Right ventricle myocardium inferior (tissue), 1 donor: ENCODE measurements at regions of chr3 and their contacts with region 1.

Region 1: DNA sequence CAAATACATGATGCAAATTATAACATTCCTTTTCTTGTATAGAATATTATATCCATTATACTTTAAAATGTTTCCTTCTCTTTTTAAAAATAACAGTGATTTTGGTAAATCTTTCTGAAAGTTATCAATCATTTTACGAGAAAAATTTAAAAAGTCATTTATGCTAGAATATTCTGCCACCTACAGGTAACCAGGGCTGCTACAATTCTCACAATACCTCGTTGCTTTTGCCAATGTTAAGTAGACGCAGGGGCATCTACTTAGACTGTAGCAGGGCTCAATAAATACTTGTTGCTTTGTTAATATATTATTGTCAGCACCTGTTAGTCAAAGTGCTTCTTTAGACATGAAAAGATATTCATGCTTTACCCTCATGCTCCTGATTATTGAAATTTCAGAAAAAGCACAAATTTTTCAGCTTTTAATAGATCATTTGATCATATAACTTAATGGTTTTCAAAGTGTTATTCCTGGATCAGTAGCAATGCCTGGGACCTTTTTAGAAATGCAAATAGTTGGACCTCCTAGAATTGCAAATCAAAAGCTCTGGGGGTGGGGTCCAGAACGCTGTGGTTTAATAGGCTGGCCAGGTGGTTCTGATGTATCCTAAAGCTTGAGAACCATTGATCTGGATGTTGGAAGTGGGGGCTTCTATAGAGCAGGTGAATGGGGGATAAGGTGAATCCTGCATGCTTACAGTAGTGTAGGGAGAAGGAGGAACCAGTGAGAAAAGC is 223.6 kb upstream of the PDZRN3 start:
- DNase-seq: no peak
- ATAC-seq: peak; percentile 57

Region 2: DNA sequence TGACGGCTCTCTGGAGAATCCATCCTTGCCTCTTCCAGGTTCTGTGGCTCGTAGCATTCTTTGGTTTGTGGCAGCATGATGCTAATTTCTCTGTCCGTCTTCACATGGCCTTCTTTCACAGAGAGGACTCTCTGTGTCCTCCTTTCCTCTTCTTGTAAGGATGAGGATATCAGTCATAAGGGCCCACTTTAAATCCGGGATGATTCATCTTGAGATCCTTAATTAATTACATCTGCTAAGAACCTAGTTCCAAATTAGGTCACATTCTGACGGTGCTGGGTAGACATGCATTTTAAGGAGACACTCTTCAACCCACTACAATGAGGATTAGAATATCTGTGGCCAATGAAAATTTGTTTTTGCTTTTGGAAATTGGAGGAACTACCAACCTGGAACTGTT is 976.2 kb before region 1 on chr3:
- intact Hi-C with region 1: no loop called
- DNase-seq: no peak
- ATAC-seq: no peak

Region 3: DNA sequence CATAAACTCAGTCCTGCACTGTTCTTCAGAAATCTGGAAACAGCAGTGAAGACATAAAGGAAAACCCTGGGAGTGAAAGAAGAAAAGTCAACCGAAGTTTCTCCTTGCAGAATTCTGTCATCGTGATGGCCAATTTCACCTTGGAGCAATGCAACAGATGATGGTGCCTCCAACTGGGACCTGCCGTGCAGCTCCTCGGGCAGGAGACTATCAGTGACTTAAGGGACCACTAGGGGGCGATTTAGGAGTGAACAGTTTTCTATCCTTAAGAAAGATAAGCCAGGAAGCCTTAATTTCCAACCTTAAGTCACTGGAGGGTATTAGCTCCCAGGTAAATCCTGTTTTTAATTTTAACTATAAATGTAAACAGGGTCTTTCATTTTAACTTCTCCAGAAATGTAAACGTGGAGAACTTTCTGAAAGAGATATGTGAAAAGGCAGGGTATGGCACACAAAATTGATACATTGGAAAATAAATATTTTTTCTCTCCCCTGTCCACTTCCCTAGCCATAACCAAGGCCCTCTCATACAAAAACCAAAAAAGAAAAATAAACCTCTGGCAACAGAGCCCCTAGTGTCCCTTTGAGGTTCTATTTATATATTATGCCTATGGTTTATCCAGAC is 339.9 kb before region 1 on chr3:
- intact Hi-C with region 1: loop called (anchors 5 kb)
- DNase-seq: no peak
- ATAC-seq: peak; percentile 54

Region 4: DNA sequence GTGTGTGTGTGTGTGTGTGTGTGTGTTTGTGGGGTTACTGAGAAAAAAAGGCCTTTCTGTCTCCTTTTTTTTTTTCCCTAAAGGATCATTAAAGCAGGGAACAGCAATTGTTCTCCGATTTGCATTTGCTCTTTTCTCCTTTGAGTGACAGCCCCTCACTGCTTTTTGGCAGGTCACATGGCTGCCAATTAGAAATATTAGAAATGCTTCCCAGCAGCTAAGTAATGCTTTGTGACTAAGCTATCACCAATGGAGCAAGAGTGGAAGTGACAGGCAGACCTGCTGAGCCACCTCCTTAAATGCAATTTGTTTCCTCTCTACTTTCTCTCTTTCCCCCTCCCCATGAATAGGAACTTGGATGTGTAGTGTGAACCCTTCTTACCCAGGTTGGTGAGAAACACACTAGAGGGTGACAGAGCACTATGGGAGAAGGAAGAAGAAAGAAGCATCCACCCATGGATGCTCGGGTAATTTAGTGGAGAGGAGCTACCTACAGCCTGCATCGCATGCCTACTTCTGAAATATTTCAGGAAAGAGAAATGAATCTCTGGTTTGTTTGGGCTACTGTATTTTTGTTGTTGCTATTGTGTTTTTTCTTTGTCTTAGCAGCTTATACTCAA is 58.4 kb before region 1 on chr3:
- intact Hi-C with region 1: loop called (anchors 5 kb)
- DNase-seq: no peak
- ATAC-seq: no peak

Region 5: DNA sequence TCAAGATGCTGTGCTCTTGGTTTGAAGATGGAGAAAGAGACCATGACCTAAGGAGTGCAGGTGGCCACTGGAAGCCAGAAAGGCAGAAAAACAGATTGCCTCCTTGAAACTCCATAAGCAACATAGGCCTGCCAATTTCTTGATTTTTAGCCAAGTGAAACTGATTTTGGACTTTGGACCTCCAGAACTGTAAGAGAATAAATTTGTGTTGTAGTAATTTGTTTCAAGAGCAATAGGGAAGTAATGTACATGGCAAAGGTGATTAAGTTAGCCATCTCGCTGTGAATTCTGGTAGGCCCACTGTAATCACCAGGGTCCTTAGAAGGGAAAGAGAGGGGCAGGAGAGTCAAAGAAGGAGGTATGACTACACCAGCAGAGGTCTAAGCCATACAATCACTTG is 527.3 kb after region 1 on chr3:
- intact Hi-C with region 1: no loop called
- DNase-seq: no peak
- ATAC-seq: no peak

Region 6: GRCh38 chr3:74410276-74410941 is 562.1 kb after region 1 on chr3:
- intact Hi-C with region 1: no loop called
- DNase-seq: no peak
- ATAC-seq: no peak

Region 7: GRCh38 chr3:74988095-74988494 is 1139.8 kb after region 1 on chr3:
- intact Hi-C with region 1: no loop called
- DNase-seq: no peak
- ATAC-seq: no peak